Naive thymus-derived CD4-positive, alpha-beta T cell (primary cell): ENCODE measurements at regions of chr9 and their contacts with region 1.

Region 1: DNA sequence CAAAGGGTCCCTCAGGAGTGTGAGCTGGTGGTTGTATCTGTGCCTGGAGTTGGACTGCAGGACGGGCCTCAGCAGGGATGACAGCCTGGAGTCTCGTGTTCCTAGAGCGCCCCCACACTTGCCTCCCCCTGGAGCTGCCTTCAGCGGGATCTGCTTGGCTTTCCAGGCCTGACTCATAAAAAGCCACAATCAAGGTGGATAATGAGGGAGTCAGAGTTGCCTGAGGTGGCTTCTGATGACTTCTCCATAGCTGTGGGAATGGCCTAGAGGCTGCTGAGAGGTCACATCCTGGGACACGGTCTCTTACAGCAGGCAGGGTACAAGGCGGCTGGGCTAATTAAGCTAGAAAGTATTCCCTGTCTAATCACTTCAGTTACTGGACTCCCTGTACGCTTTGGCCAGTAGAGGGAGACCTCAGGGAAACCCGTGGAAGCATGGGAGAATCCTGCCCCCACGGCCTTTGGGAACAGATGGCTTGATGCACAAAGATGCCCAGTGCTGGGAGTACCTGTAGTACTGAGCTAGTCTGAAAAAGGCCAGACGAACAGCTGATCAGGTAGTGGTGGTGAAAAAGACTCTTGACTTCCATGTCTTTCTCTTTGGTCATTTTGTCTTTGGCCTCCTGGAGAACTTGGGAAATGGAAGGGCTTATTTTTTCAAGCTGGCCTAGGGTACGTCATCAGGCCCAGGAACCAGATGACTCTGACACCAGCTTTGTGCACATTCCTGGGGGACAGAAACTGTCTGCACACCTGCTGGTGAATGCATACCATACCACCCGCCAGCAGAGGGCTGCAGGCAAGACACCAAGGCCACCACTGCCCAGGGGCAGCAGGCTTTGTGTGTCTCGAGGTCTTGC is 16.1 kb upstream of the FRRS1L start:
- DNase-seq: no peak
- ATAC-seq: no peak
- H3K4me3 ChIP-seq: no peak overlapping the region
- H3K4me3 Mint-ChIP-seq: no peak overlapping the region
- H3K27ac ChIP-seq: no peak overlapping the region
- H3K27ac Mint-ChIP-seq: peak overlapping the region in 1 of 9 donors; percentile 48
- H3K4me1 ChIP-seq: no peaks in the 10 kb centered on the region
- H3K4me1 Mint-ChIP-seq: peaks cover 0 to 25% (median 20%) of the 10 kb centered on the region in 7 donors
- H3K27me3 ChIP-seq: no peaks in the 10 kb centered on the region
- H3K27me3 Mint-ChIP-seq: peaks cover 0 to 25% (median 0%) of the 10 kb centered on the region in 5 donors

Region 2: GRCh38 chr9:109012876-109013678 is 170.1 kb before region 1 on chr9 and contains the start of gene CTNNAL1:
- CTCF ChIA-PET with region 1: no interaction called
- POLR2A ChIA-PET with region 1: no interaction called
- intact Hi-C with region 1: loop called (anchors 2 to 5 kb)
- DNase-seq: peak; percentile 68 to 88 (median 78)
- ATAC-seq: peak; percentile 98
- H3K4me3 ChIP-seq: peak within 1 kb of the TSS; percentile 72
- H3K4me3 Mint-ChIP-seq: peak within 1 kb of the TSS; percentile 93 to 99 (median 97)
- H3K27ac ChIP-seq: peak within 1 kb of the TSS; percentile 77
- H3K27ac Mint-ChIP-seq: peak within 1 kb of the TSS; percentile 79 to 95 (median 92)
- H3K4me1 ChIP-seq: peaks cover 6 to 13% of the 10 kb centered on the region in 2 donors
- H3K4me1 Mint-ChIP-seq: peaks cover 17 to 34% (median 21%) of the 10 kb centered on the region in 7 donors
- H3K27me3 ChIP-seq: no peaks in the 10 kb centered on the region
- H3K27me3 Mint-ChIP-seq: peaks cover 0 to 22% (median 4%) of the 10 kb centered on the region in 5 donors
- total RNA-seq, gene CTNNAL1: 1.1 to 9.9 (median 2.5) TPM

Region 3: DNA sequence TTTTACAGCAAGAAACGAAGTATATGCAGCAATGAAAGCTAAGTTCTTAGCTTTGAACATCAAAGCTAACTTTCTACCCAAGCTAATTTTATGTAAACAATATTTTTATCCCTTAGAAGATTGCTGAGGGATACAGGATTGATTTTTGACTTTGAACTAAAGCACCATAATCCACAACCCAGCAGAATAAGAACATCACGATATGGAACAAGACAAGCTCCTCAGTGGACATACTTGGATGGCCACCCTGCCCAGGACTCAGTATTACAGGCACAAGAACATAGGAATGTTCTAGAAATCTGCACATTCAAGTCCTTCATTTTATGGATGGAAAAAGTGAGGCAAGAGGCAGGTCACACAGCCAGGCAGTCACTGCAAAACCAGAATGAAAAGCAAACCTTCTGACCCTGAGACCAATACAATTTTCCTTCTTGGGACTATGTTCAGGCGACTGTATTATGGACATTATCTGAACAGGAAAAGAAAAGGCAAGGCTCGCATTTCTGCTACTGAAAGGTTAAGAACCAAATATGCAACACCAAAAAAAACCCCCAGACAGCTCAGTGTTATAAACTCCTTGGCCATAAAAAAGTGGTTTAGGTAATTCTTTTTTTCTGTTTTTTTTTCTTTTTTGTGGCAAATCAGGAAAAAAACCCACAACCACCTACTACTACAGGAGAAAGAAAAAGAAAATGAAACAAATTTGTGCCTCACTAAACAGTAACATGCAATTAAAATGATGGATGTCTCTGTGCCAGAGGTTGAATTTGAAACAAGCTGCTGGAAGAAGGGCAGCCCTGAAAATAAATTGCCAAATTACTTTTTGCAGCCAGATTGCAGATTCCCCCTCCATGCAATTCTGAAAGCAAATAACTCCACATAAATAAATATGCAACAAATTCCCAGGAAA is 112.3 kb after region 1 on chr9:
- CTCF ChIA-PET with region 1: no interaction called
- POLR2A ChIA-PET with region 1: no interaction called
- intact Hi-C with region 1: loop called in 1 of 2 experiments (anchors 1 kb)
- DNase-seq: no peak
- ATAC-seq: no peak
- H3K4me3 ChIP-seq: no peak overlapping the region
- H3K4me3 Mint-ChIP-seq: peak overlapping the region in 1 of 10 donors; percentile 60
- H3K27ac ChIP-seq: no peak overlapping the region
- H3K27ac Mint-ChIP-seq: peak overlapping the region in 1 of 9 donors; percentile 23
- H3K4me1 ChIP-seq: no peaks in the 10 kb centered on the region
- H3K4me1 Mint-ChIP-seq: peaks cover 0 to 30% (median 7%) of the 10 kb centered on the region in 7 donors
- H3K27me3 ChIP-seq: no peaks in the 10 kb centered on the region
- H3K27me3 Mint-ChIP-seq: peaks cover 20 to 30% (median 21%) of the 10 kb centered on the region in 5 donors